Activated naive CD4-positive, alpha-beta T cell treated with anti-CD3 and anti-CD28 coated beads, Interleukin-2, amount 10 ng/mL, durations not matched to agents 7 days and 5 days (primary cell): ENCODE measurements at regions of chr4 and their contacts with region 1.

Region 1: DNA sequence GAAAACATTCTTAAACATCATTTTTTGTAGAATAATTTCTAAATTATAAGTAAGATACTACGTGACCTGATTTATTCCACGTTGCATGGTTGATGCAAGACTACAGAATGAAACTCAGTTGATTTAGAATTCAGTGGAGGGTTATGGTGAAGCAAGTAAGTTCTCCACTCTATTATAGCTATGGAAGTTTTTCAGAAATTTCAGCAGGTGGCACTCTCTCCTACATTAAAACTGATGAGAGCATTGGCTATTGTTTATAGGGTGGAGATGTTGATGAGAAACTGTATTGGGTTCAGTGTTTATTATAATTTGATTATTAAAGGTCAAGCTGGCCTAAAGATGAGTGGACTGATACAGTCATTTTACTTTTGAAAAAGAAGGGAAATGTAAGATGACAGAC is 88.0 kb downstream of the FNIP2 start:
- DNase-seq: no peak
- H3K4me3 Mint-ChIP-seq: no peak overlapping the region
- H3K27ac Mint-ChIP-seq: no peak overlapping the region
- H3K4me1 Mint-ChIP-seq: no peaks in the 10 kb centered on the region
- H3K27me3 Mint-ChIP-seq: no peaks in the 10 kb centered on the region

Region 2: GRCh38 chr4:159175085-159175988 is 318.5 kb after region 1 on chr4:
- CTCF ChIA-PET with region 1: interaction called, 11 read pairs
- DNase-seq: peak; percentile 65
- H3K4me3 Mint-ChIP-seq: no peak overlapping the region
- H3K27ac Mint-ChIP-seq: no peak overlapping the region
- H3K4me1 Mint-ChIP-seq: peaks cover 52% of the 10 kb centered on the region
- H3K27me3 Mint-ChIP-seq: no peaks in the 10 kb centered on the region

Region 3: GRCh38 chr4:159201168-159201567 is 344.3 kb after region 1 on chr4:
- CTCF ChIA-PET with region 1: interaction called, 41 read pairs
- DNase-seq: no peak
- H3K4me3 Mint-ChIP-seq: no peak overlapping the region
- H3K27ac Mint-ChIP-seq: no peak overlapping the region
- H3K4me1 Mint-ChIP-seq: peaks cover 17% of the 10 kb centered on the region
- H3K27me3 Mint-ChIP-seq: no peaks in the 10 kb centered on the region